Gastrocnemius medialis (tissue), 4 donors: ENCODE measurements at regions of chr14 and their contacts with region 1.

Region 1: DNA sequence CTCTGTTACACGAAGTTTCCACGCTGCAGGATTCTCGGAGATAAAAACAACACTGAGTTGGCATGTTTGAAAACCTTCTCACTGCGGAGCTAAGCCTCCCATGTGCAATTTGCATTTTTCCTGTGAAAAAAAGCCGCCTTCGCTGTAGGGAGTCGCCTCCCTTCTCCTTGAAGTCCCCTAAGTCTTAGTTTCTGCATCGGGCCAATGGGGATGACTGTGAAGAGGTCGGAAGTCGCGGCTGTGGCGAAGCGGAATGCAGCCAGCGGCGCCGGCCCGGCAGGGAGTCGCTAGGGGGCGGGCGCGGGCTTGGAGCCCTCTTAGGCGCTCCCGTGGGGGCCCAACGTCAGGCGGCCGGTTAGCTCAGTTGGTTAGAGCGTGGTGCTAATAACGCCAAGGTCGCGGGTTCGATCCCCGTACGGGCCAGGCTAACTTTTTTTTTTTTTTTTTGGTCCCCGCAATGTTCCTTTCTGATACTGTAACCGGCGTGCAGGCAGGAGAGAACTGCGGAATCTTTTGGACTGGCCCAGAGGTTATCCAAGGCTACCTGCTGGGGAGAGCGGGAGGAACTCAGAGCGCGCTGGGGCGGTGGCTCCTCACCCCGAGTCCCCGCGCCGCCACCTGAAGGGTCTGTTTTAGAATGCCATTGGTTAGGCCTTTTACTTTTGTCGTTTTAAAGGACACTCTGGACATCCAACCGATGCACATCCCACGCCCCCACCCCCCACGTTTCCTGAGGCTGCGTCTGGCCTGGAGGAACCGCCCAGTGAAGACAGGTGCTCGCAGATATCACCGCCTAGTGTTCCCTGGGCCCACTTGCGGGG is 2.6 kb upstream of the ZNF839 start:
- DNase-seq: peak; percentile 89
- ATAC-seq: peak; percentile 45 to 52
- H3K4me3 ChIP-seq: peak overlapping the region; percentile 51 to 66 (median 63)
- H3K27ac ChIP-seq: peak overlapping the region; percentile 92 to 99 (median 97)
- H3K4me1 ChIP-seq: peaks cover 50 to 51% of the 10 kb centered on the region in 2 donors
- H3K27me3 ChIP-seq: no peaks in the 10 kb centered on the region
- CTCF ChIP-seq: peak; percentile 78 to 87 (median 85)
- POLR2A ChIP-seq: no peak

Region 2: DNA sequence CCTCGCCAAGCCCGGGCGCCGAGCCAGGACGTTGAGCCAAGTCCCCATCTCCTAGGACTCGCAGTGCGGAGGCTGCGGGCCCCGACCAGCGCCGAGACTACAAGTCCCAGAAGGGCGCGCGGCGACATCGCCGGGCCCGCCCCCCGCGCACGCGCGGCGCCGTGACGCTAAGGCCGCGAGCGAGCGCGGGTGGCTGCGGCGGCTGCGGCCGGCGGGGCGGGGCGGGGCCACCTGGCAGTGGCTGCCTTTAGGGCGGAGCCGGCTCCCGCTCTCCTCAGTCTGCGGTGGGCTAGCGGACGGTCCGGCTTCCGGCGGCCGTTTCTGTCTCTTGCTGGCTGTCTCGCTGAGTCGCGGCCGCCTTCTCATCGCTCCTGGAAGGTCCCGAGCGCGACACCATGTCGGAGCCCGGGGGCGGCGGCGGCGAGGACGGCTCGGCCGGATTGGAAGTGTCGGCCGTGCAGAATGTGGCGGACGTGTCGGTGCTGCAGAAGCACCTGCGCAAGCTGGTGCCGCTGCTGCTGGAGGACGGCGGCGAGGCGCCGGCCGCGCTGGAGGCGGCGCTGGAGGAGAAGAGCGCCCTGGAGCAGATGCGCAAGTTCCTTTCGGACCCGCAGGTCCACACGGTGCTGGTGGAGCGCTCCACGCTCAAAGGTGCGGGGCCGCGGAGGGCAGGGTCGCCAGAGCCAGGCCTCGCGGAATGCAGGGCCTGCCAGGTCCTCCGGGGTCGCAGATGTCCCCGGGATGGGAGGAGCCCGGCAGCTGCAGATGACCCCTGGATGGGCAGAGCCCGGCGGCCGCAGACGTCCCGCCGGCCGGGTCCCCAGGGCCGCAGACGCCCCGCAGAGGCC is 352.4 kb before region 1 on chr14 and contains the start of gene DYNC1H1:
- in situ Hi-C with region 1: loop called in 2 of 4 experiments (anchors 10 kb)
- intact Hi-C with region 1: loop called (anchors 5 kb)
- DNase-seq: peak; percentile 82 to 92
- ATAC-seq: peak; percentile 82 to 86
- H3K4me3 ChIP-seq: peak within 1 kb of the TSS; percentile 80 to 99 (median 94)
- H3K27ac ChIP-seq: peak within 1 kb of the TSS; percentile 92 to 98 (median 94)
- H3K4me1 ChIP-seq: peaks cover 38% of the 10 kb centered on the region in 2 donors
- H3K27me3 ChIP-seq: no peaks in the 10 kb centered on the region
- CTCF ChIP-seq: no peak
- POLR2A ChIP-seq: peak; percentile 99 to 100
- total RNA-seq, gene DYNC1H1: 486 to 737 (median 718) TPM

Region 3: DNA sequence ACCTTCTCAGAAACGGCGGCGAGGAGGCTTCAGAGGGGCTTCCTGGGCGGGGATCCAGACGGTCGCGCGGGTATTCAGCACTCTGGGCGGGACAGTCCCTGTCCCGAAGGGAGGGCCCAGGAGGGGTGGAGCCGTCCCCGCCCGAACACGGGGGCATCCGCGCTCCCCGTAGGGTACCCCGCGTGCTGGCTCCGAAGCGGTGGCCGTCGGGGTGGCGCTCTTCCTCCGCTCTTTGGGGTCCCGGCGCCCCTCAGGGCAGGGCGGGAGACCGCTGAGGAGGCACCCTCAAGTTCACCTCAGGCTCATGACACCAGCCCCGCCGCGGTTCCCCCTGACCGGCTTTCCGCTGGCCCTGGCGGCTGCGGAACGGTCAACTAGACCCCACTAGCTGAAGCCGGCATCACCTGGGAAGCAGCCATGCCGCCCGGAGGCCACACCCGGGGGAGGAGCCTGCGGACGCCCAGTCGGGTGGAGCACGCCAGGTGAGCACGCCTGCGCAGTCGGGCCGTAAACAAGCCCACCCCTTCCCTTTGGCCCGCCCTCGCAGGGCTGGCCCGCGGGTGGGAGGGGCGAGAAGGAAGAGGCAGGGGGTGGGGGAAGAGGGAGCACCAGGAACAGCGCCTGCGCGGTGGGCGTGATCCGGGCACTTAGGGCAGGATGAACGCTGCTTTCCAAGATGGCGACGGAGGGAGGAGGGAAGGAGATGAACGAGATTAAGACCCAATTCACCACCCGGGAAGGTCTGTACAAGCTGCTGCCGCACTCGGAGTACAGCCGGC is 177.5 kb before region 1 on chr14 and contains the start of gene WDR20:
- in situ Hi-C with region 1: loop called in 2 of 4 experiments (anchors 10 to 25 kb)
- intact Hi-C with region 1: loop called (anchors 5 kb)
- DNase-seq: peak; percentile 98
- ATAC-seq: peak; percentile 97
- H3K4me3 ChIP-seq: peak within 1 kb of the TSS; percentile 63 to 99 (median 87)
- H3K27ac ChIP-seq: peak within 1 kb of the TSS; percentile 85 to 93 (median 92)
- H3K4me1 ChIP-seq: peaks cover 20 to 25% of the 10 kb centered on the region in 2 donors
- H3K27me3 ChIP-seq: no peaks in the 10 kb centered on the region
- CTCF ChIP-seq: no peak
- POLR2A ChIP-seq: peak; percentile 55 to 59
- total RNA-seq, gene WDR20: 18.1 to 49.7 (median 21.0) TPM

Region 4: DNA sequence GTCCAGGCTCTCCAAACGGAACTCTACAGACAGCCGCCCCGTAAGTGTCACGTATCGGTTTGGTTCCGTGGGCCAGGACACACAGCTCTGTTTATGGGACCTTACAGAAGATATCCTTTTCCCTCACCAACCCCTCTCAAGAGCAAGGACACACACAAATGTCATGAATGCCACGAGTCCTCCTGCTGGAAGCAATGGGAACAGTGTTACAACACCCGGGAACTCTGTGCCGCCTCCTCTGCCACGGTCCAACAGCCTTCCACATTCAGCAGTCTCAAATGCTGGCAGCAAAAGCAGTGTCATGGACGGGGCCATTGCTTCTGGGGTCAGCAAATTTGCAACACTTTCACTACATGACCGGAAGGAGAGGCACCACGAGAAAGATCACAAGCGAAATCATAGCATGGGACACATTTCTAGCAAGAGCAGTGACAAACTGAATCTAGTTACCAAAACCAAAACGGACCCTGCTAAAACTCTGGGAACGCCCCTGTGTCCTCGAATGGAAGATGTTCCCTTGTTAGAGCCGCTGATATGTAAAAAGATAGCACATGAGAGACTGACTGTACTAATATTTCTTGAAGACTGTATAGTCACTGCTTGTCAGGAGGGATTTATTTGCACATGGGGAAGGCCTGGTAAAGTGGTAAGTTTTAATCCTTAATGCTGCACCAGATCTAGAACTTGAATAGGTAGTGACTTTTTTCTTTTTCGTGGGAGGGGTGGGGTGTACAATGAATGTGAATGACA is 107.6 kb before region 1 on chr14:
- in situ Hi-C with region 1: no loop called
- intact Hi-C with region 1: no loop called
- DNase-seq: peak; percentile 30 to 87
- ATAC-seq: peak; percentile 81 to 98
- H3K4me3 ChIP-seq: no peak overlapping the region
- H3K27ac ChIP-seq: peak overlapping the region; percentile 5 to 78 (median 62)
- H3K4me1 ChIP-seq: peaks cover 1 to 7% of the 10 kb centered on the region in 2 donors
- H3K27me3 ChIP-seq: no peaks in the 10 kb centered on the region
- CTCF ChIP-seq: peak; percentile 30 to 61 (median 50)
- POLR2A ChIP-seq: no peak

Region 5: GRCh38 chr14:102362545-102363181 is 45.7 kb after region 1 on chr14 and contains the starts of genes CINP and TECPR2:
- in situ Hi-C with region 1: no loop called
- intact Hi-C with region 1: loop called (anchors 2 kb)
- DNase-seq: peak; percentile 97 to 98
- ATAC-seq: peak; percentile 91 to 93
- H3K4me3 ChIP-seq: peak within 1 kb of the TSS; percentile 70 to 97 (median 86)
- H3K27ac ChIP-seq: peak within 1 kb of the TSS; percentile 88 to 99 (median 97)
- H3K4me1 ChIP-seq: peaks cover 24 to 32% of the 10 kb centered on the region in 2 donors
- H3K27me3 ChIP-seq: no peaks in the 10 kb centered on the region
- CTCF ChIP-seq: no peak
- POLR2A ChIP-seq: peak; percentile 90 to 94
- total RNA-seq, gene CINP: 19.2 to 25.1 (median 21.5) TPM
- total RNA-seq, gene TECPR2: 10.0 to 45.0 (median 20.2) TPM

Region 6: GRCh38 chr14:102524466-102525218 is 207.7 kb after region 1 on chr14:
- in situ Hi-C with region 1: loop called in 1 of 4 experiments (anchors 25 kb)
- intact Hi-C with region 1: no loop called
- DNase-seq: peak; percentile 93 to 96
- ATAC-seq: peak; percentile 94 to 95
- H3K4me3 ChIP-seq: peak overlapping the region; percentile 69 to 77 (median 72)
- H3K27ac ChIP-seq: peak overlapping the region; percentile 68 to 78 (median 75)
- H3K4me1 ChIP-seq: peaks cover 11 to 12% of the 10 kb centered on the region in 2 donors
- H3K27me3 ChIP-seq: no peaks in the 10 kb centered on the region
- CTCF ChIP-seq: peak; percentile 94 to 97 (median 95)
- POLR2A ChIP-seq: peak in 1 of 2 donors; percentile 16

Region 7: GRCh38 chr14:103385152-103385993 is 1068.4 kb after region 1 on chr14 and contains the start of gene MARK3:
- in situ Hi-C with region 1: no loop called
- intact Hi-C with region 1: loop called (anchors 5 kb)
- DNase-seq: peak; percentile 95 to 96
- ATAC-seq: peak; percentile 90
- H3K4me3 ChIP-seq: peak within 1 kb of the TSS; percentile 78 to 100 (median 87)
- H3K27ac ChIP-seq: peak within 1 kb of the TSS; percentile 94 to 100 (median 98)
- H3K4me1 ChIP-seq: peaks cover 25% of the 10 kb centered on the region in 2 donors
- H3K27me3 ChIP-seq: no peaks in the 10 kb centered on the region
- CTCF ChIP-seq: peak; percentile 33 to 50 (median 36)
- POLR2A ChIP-seq: peak; percentile 93 to 96
- total RNA-seq, gene MARK3: 60.2 to 73.1 (median 71.6) TPM